ENCODE measurements at regions of chr17 and their contacts with region 1.

Region 1: GRCh38 chr17:82242977-82243647 is 14.3 kb downstream of the SLC16A3 start:
- DNase-seq: no peak
- H3K4me3 ChIP-seq: no peak overlapping the region
- H3K27ac ChIP-seq: peak overlapping the region; percentile 81 to 89 (median 85)
- H3K4me1 ChIP-seq: peaks cover 75 to 100% (median 93%) of the 10 kb centered on the region in 4 donors
- H3K27me3 ChIP-seq: no peaks in the 10 kb centered on the region
- CTCF ChIP-seq: no peak
- EP300 ChIP-seq: no peak
- POLR2A ChIP-seq: no peak

Region 2: DNA sequence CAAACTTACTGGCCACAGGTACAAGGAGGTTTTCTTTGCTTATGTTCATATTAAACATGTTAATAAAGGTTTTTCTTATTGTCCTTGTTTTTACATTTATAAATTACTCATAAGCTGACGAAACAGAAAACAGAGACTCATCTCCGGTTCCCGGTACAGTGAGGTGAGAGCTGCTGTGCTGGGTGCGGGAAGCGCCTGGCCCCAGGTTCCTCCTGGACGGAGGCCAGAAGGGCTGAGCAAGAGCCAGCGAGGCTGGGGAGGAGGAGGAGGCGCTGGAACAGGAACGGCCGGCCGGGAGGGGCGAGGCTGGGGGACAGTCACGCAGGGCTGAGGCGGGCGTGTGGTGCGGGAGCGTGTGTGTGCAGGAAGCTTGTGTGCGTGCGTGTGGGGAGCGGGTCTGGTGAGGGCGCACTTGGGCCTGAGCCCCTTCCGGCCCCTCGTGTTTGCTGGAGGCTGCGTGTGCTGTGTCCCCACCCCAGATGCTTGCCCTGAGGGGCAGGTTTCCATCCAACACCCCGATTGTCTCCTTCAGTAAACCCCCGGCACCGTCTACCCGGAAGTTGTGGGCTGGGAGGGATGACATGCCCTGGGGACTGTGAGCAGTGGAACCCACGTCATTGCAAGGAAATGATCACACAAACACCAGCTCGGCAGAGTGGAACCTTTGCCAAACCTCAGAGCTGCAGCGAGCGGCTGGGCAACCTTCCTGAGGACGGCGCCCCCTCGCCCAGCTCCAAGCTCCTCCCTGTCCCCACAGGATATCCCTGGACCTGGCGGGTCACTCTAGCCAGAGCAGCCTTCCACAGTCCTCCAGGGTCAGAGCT is 54.8 kb after region 1 on chr17:
- intact Hi-C with region 1: loop called (anchors 1 kb)
- DNase-seq: peak; percentile 96
- H3K4me3 ChIP-seq: peak overlapping the region; percentile 52 to 64 (median 58)
- H3K27ac ChIP-seq: peak overlapping the region; percentile 88 to 94 (median 90)
- H3K4me1 ChIP-seq: peaks cover 58 to 73% (median 67%) of the 10 kb centered on the region in 4 donors
- H3K27me3 ChIP-seq: no peaks in the 10 kb centered on the region
- CTCF ChIP-seq: no peak
- EP300 ChIP-seq: peak; percentile 95
- POLR2A ChIP-seq: peak; percentile 73

Measured in esophagus muscularis mucosa (tissue), 4 donors.